CD8-positive, alpha-beta T cell (primary cell): ENCODE measurements at regions of chr15 and their contacts with region 1.

Region 1: DNA sequence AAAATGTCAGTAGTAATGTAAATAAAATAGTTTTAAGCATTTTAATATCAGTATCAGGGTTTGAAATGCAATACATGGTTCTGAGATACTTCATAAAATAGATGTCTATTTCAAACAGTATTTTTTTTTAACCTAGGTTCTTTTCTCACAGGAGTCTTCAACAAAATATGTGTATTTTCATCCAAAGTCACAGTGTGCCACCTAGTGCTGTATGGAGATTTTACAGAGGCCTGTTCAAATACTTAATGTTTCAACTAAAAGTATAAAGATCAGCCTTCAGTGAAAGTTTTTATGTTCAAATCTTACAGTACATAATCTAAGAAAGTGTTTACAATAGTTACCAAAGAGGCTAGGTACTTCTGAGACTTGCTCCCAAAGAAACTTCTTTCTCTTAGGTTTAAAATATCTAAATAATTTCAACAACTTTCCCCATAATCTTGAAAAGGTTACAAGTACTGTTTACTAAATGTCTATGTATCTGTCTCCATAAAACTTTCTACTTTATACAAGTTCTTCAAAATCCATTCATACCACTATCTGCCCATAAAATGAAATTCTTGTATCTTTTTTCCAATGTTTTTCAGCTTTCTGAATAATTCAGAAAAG is 38.3 kb downstream of the SCAPER start:
- DNase-seq: peak in 2 of 9 experiments; percentile 7 to 18
- ATAC-seq: no peak
- H3K4me3 ChIP-seq: no peak overlapping the region
- H3K4me3 Mint-ChIP-seq: no peak overlapping the region
- H3K27ac ChIP-seq: no peak overlapping the region
- H3K27ac Mint-ChIP-seq: no peak overlapping the region
- H3K4me1 ChIP-seq: no peaks in the 10 kb centered on the region
- H3K4me1 Mint-ChIP-seq: peaks cover 30% of the 10 kb centered on the region
- H3K27me3 ChIP-seq: no peaks in the 10 kb centered on the region
- H3K27me3 Mint-ChIP-seq: no peaks in the 10 kb centered on the region
- CTCF ChIP-seq: peak; percentile 2

Region 2: DNA sequence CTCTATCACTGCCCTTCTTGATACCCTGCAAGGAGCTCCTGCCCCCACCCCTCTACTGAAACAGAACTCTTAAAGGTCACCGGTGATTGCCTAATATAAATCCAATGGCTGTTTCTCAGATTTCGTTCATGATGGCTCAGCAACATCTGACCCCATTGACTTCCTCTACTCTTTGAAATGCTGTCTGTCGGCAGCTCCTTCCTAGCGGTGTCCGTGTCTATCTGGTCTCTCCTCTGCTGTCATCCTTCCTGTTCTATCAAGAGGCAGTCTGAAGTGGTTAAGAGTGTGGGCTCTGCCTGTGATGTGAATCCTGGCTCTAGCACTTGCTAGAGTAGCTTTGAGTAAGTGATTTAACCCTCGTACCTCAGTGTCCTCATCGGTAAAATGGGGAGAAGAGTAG is 801.6 kb before region 1 on chr15:
- CTCF ChIA-PET with region 1: no interaction called
- POLR2A ChIA-PET with region 1: no interaction called
- intact Hi-C with region 1: no loop called
- DNase-seq: peak in 4 of 9 experiments; percentile 6 to 49 (median 30)
- ATAC-seq: peak; percentile 71
- H3K4me3 ChIP-seq: no peak overlapping the region
- H3K4me3 Mint-ChIP-seq: no peak overlapping the region
- H3K27ac ChIP-seq: no peak overlapping the region
- H3K27ac Mint-ChIP-seq: no peak overlapping the region
- H3K4me1 ChIP-seq: peaks cover 14% of the 10 kb centered on the region
- H3K4me1 Mint-ChIP-seq: peaks cover 11% of the 10 kb centered on the region
- H3K27me3 ChIP-seq: peaks cover 2 to 7% of the 10 kb centered on the region in 2 experiments
- H3K27me3 Mint-ChIP-seq: peaks cover 43% of the 10 kb centered on the region
- CTCF ChIP-seq: no peak

Region 3: DNA sequence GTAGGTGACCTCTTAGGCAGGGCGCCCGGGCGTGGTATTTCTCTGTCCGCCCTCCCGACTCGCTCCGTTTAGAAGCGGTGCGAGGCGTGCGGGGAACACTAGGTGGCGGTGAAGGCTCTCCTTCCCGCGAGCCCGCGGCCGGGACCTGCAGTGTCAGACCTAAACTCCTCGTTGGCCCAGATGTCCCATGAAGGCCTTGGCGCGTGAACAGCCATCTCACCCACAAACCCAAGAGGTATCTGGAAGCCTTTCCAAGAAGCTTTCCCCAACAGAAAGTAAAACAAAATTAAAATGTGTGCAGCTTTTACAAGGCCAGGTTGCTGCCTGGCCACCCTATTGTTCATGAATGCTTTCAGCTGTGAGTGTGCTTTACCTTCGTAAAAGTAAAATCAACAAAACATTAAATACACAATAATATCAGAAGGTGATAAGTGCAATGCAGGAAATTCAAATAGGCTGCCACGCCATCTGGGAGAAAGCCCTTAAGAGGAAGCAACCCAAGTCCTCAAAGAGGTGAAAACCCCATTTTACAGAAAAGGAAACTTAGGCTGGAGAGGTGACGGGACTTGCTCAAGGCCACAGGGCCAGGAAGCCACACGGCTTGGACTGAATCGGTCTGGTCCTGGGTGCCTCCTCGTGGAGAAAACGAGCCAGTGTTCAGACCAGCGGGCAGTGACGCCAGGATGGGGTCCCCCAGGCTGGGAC is 675.8 kb before region 1 on chr15:
- CTCF ChIA-PET with region 1: interaction called, 6 read pairs
- POLR2A ChIA-PET with region 1: no interaction called
- intact Hi-C with region 1: loop called in 1 of 2 experiments (anchors 2 kb)
- DNase-seq: peak; percentile 28 to 78 (median 65)
- ATAC-seq: peak; percentile 77
- H3K4me3 ChIP-seq: no peak overlapping the region
- H3K4me3 Mint-ChIP-seq: peak overlapping the region; percentile 71
- H3K27ac ChIP-seq: no peak overlapping the region
- H3K27ac Mint-ChIP-seq: no peak overlapping the region
- H3K4me1 ChIP-seq: peaks cover 10% of the 10 kb centered on the region
- H3K4me1 Mint-ChIP-seq: peaks cover 14% of the 10 kb centered on the region
- H3K27me3 ChIP-seq: peaks cover 0 to 5% of the 10 kb centered on the region in 2 experiments
- H3K27me3 Mint-ChIP-seq: peaks cover 48% of the 10 kb centered on the region
- CTCF ChIP-seq: peak; percentile 62

Region 4: DNA sequence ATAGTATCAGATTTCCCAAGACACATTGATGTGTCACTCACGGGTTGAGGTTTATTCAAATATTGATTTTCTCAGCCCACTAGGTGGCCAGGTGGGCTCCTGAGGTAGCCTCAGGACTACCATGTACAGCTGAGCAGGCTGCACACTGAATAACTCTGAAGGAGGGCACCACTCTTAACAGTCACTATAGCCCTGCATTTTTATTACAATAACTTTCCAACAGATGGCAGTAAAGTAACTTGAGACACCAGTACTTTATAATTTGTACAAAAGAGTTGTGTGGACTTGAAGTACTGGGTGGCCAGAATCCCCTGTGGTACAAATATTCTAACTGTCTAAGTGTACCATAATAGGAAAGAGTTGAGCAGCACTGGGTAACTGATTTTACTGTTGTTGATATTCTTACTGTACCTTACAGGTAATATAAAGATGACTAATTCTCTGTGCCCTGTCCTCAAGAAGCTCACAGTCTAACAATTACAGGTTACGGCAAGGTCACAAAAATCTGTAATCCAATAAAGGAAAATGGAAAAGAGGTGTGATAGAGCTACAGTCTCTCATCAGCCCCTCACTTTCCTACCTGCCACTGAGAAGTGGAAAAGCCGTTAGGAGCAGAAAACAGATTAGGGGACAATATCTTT is 631.5 kb before region 1 on chr15:
- CTCF ChIA-PET with region 1: no interaction called
- POLR2A ChIA-PET with region 1: no interaction called
- intact Hi-C with region 1: loop called (anchors 1 to 2 kb)
- DNase-seq: peak in 2 of 9 experiments; percentile 29 to 54
- ATAC-seq: peak; percentile 36
- H3K4me3 ChIP-seq: no peak overlapping the region
- H3K4me3 Mint-ChIP-seq: no peak overlapping the region
- H3K27ac ChIP-seq: no peak overlapping the region
- H3K27ac Mint-ChIP-seq: no peak overlapping the region
- H3K4me1 ChIP-seq: no peaks in the 10 kb centered on the region
- H3K4me1 Mint-ChIP-seq: no peaks in the 10 kb centered on the region
- H3K27me3 ChIP-seq: no peaks in the 10 kb centered on the region
- H3K27me3 Mint-ChIP-seq: no peaks in the 10 kb centered on the region
- CTCF ChIP-seq: peak; percentile 56

Region 5: DNA sequence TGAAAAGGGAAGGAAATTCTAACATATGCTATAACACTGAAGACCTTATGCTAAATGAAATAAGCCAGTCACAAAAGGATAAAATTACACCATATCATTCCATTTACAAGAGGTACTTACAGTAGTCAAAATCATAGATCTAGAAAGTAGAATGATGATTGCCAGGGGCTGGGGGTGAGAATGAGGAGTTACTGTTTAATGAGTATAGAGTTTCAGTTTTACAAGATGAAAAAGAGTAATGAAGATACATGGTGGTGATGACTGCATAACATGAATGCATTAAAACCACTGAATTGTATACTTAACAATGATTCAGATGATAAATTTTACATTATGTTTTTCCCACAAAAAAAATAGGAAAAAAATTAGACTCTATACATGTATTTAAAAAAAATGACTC is 114.3 kb before region 1 on chr15:
- CTCF ChIA-PET with region 1: no interaction called
- POLR2A ChIA-PET with region 1: no interaction called
- intact Hi-C with region 1: no loop called
- DNase-seq: no peak
- ATAC-seq: no peak
- H3K4me3 ChIP-seq: no peak overlapping the region
- H3K4me3 Mint-ChIP-seq: no peak overlapping the region
- H3K27ac ChIP-seq: no peak overlapping the region
- H3K27ac Mint-ChIP-seq: no peak overlapping the region
- H3K4me1 ChIP-seq: no peaks in the 10 kb centered on the region
- H3K4me1 Mint-ChIP-seq: no peaks in the 10 kb centered on the region
- H3K27me3 ChIP-seq: no peaks in the 10 kb centered on the region
- H3K27me3 Mint-ChIP-seq: no peaks in the 10 kb centered on the region
- CTCF ChIP-seq: no peak

Region 6: GRCh38 chr15:76840830-76841460 is 25.9 kb before region 1 on chr15:
- CTCF ChIA-PET with region 1: no interaction called
- POLR2A ChIA-PET with region 1: no interaction called
- intact Hi-C with region 1: loop called in 1 of 2 experiments (anchors 1 kb)
- DNase-seq: peak in 1 of 9 experiments; percentile 11
- ATAC-seq: no peak
- H3K4me3 ChIP-seq: no peak overlapping the region
- H3K4me3 Mint-ChIP-seq: no peak overlapping the region
- H3K27ac ChIP-seq: no peak overlapping the region
- H3K27ac Mint-ChIP-seq: no peak overlapping the region
- H3K4me1 ChIP-seq: no peaks in the 10 kb centered on the region
- H3K4me1 Mint-ChIP-seq: peaks cover 24% of the 10 kb centered on the region
- H3K27me3 ChIP-seq: no peaks in the 10 kb centered on the region
- H3K27me3 Mint-ChIP-seq: no peaks in the 10 kb centered on the region
- CTCF ChIP-seq: peak; percentile 13